CD4-positive, alpha-beta memory T cell (primary cell): ENCODE measurements at regions of chr19 and their contacts with region 1.

Region 1: GRCh38 chr19:45439569-45440254 is 16.0 kb upstream of the ERCC1 start:
- DNase-seq: peak; percentile 87 to 90 (median 87)
- H3K4me3 ChIP-seq: peak overlapping the region in 1 of 2 donors; percentile 66
- H3K4me3 Mint-ChIP-seq: peak overlapping the region; percentile 65 to 83 (median 78)
- H3K27ac ChIP-seq: peak overlapping the region; percentile 62
- H3K27ac Mint-ChIP-seq: peak overlapping the region in 6 of 7 donors; percentile 83 to 96 (median 92)
- H3K4me1 ChIP-seq: peaks cover 36% of the 10 kb centered on the region
- H3K4me1 Mint-ChIP-seq: peaks cover 15 to 40% (median 27%) of the 10 kb centered on the region in 4 donors
- H3K27me3 ChIP-seq: no peaks in the 10 kb centered on the region
- H3K27me3 Mint-ChIP-seq: no peaks in the 10 kb centered on the region

Region 2: DNA sequence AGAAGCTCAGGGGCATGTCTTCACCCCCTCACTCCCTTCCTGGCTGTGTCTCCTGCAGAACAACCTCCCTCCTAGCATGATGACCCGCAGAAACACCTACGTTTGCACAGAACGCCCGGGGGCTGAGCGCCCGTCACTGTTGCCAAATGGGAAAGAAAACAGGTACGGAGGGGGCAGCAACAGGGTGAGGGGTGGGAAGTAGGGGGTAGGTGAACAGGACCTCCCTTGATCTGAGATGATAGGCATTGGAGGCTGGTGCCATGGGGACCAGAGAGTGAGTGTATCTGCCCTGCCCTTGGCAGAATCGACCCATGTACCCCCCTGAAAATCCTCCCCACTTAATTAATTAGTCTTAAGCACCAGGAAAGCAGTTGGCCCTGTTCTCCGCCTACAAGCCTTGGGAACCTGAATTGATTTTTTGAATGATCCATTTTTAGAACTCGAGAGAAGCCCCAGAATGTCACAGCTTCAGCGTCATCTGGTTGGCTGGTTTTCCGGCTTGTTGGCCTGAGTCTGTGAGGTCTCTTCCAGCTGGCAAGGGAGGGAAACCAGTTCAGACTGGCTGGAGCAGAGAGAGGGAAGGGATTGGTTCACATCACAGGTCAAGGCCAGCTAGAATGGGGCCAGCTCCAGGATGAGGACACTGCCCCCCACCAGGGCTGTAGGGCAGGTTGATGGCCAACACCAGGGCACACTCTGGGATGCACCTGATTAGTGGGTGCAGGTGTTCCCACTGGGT is 145.3 kb before region 1 on chr19:
- CTCF ChIA-PET with region 1: no interaction called
- POLR2A ChIA-PET with region 1: no interaction called
- intact Hi-C with region 1: no loop called
- DNase-seq: no peak
- H3K4me3 ChIP-seq: no peak overlapping the region
- H3K4me3 Mint-ChIP-seq: no peak overlapping the region
- H3K27ac ChIP-seq: no peak overlapping the region
- H3K27ac Mint-ChIP-seq: peak overlapping the region in 1 of 7 donors; percentile 17
- H3K4me1 ChIP-seq: no peaks in the 10 kb centered on the region
- H3K4me1 Mint-ChIP-seq: peaks cover 0 to 1% (median 0%) of the 10 kb centered on the region in 4 donors
- H3K27me3 ChIP-seq: no peaks in the 10 kb centered on the region
- H3K27me3 Mint-ChIP-seq: no peaks in the 10 kb centered on the region

Region 3: DNA sequence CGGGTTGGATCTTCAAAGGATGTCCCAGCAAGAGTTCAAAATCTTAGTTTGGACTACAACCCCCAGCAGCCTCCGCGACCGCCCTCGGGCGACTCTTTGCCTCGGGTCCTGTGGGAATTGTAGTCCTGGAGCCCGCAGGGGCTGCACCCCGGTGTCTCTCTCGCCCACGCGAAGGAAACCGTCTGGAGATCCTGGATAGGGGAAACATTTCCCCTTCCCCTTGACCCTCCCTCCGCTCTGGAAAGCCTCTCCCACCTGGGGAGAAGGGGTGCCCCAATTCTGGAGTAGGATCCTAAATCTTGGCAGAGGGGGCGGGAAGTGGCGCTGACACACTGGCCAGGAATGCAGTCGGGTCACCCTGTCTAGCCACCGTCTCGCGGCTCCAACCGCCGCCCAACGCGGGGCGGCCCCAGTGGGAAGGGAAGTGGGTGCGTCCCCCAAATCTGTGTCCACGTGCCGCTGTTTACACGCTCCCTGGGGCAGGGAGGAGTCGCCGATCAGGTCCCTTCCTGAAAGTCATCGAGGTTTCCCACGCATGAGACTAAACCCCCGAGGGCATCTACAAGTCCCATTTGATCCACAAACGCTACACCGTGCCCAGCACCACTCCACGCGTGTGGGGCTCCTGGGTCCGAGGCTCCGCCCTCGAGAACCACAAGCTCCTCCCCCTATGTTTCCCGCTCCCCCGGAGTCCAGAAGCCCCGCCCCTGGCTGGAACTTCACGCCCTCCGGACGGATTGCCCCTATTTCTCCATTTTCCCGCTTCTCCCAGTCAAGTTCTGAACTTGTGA is 34.1 kb before region 1 on chr19:
- CTCF ChIA-PET with region 1: interaction called, 11 read pairs
- POLR2A ChIA-PET with region 1: interaction called, 5 read pairs
- intact Hi-C with region 1: no loop called
- DNase-seq: peak; percentile 80 to 91 (median 82)
- H3K4me3 ChIP-seq: peak overlapping the region; percentile 91 to 94
- H3K4me3 Mint-ChIP-seq: peak overlapping the region; percentile 90 to 99 (median 97)
- H3K27ac ChIP-seq: peak overlapping the region; percentile 65
- H3K27ac Mint-ChIP-seq: peak overlapping the region; percentile 69 to 99 (median 96)
- H3K4me1 ChIP-seq: peaks cover 35% of the 10 kb centered on the region
- H3K4me1 Mint-ChIP-seq: peaks cover 13 to 35% (median 26%) of the 10 kb centered on the region in 4 donors
- H3K27me3 ChIP-seq: peaks cover 16% of the 10 kb centered on the region
- H3K27me3 Mint-ChIP-seq: peaks cover 12 to 22% of the 10 kb centered on the region in 2 donors

Region 4: DNA sequence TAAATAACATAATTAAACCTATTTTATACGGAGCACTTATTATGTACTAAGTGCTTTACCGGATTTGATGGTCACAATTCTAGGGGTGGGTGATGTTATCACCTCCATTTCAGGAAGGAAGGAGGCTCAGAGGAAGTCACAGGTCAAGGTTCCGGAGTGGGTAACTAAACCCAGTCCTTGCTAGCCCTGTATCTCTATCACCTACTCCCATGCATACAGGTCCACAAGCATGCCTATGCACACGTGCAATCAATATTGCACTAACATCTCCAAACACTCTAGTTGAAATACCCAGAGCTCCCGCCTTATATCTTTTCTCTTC is 10.3 kb after region 1 on chr19:
- CTCF ChIA-PET with region 1: interaction called, 19 read pairs
- POLR2A ChIA-PET with region 1: interaction called, 23 read pairs
- intact Hi-C with region 1: no loop called
- DNase-seq: peak in 3 of 5 donors; percentile 61 to 69 (median 64)
- H3K4me3 ChIP-seq: peak overlapping the region; percentile 45 to 50
- H3K4me3 Mint-ChIP-seq: peak overlapping the region; percentile 93 to 97 (median 96)
- H3K27ac ChIP-seq: peak overlapping the region; percentile 99
- H3K27ac Mint-ChIP-seq: peak overlapping the region; percentile 99 to 100 (median 100)
- H3K4me1 ChIP-seq: peaks cover 42% of the 10 kb centered on the region
- H3K4me1 Mint-ChIP-seq: peaks cover 36 to 75% (median 49%) of the 10 kb centered on the region in 4 donors
- H3K27me3 ChIP-seq: no peaks in the 10 kb centered on the region
- H3K27me3 Mint-ChIP-seq: peaks cover 0 to 4% of the 10 kb centered on the region in 2 donors

Region 5: DNA sequence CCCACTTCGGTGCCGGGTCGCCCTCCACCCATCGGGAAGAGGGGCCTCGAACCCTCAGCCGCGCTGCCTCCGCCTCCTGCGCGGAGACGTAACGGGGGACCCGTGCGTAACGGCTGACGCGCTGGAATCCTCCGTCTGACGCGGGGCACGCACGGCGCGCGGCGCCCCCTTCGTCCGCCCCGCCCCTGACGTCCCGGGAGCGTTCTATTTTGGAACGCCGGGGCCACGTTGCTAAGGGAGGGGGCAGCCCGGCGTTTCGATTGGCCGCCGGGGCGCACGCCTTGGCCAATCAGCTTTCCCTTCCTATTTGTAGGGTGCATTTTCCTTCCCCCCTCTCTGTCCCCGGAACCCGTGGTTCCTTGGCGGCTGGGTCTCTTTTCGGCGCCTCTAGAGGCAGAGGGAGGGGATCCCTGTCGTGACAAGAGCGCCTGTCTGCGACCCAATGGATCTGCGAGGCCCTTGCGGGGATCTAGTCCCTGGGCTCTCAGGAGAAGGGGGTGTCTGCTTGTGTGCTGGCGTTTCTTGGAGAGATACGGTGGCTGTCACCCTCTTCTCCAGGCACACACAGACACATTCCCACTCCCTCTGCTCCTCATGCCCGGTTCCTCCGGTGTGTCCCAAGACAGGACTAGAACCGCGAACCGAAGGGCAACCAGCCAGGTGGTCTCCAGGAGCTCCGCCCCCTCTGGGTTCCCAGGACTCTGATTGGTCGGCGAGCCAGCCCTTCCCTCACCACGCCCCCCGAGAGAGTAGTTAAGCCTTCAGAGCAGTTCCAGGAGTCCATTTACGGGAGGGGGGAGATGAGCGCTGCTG is 29.6 kb after region 1 on chr19:
- CTCF ChIA-PET with region 1: interaction called, 487 read pairs
- POLR2A ChIA-PET with region 1: interaction called, 240 read pairs
- intact Hi-C with region 1: loop called (anchors 1 kb)
- DNase-seq: peak; percentile 92 to 97 (median 96)
- H3K4me3 ChIP-seq: peak overlapping the region; percentile 93 to 100
- H3K4me3 Mint-ChIP-seq: peak overlapping the region; percentile 93 to 96 (median 95)
- H3K27ac ChIP-seq: peak overlapping the region; percentile 98
- H3K27ac Mint-ChIP-seq: peak overlapping the region; percentile 99 to 100 (median 99)
- H3K4me1 ChIP-seq: peaks cover 27% of the 10 kb centered on the region
- H3K4me1 Mint-ChIP-seq: peaks cover 9 to 73% (median 21%) of the 10 kb centered on the region in 4 donors
- H3K27me3 ChIP-seq: no peaks in the 10 kb centered on the region
- H3K27me3 Mint-ChIP-seq: peaks cover 2 to 3% of the 10 kb centered on the region in 2 donors

Region 6: DNA sequence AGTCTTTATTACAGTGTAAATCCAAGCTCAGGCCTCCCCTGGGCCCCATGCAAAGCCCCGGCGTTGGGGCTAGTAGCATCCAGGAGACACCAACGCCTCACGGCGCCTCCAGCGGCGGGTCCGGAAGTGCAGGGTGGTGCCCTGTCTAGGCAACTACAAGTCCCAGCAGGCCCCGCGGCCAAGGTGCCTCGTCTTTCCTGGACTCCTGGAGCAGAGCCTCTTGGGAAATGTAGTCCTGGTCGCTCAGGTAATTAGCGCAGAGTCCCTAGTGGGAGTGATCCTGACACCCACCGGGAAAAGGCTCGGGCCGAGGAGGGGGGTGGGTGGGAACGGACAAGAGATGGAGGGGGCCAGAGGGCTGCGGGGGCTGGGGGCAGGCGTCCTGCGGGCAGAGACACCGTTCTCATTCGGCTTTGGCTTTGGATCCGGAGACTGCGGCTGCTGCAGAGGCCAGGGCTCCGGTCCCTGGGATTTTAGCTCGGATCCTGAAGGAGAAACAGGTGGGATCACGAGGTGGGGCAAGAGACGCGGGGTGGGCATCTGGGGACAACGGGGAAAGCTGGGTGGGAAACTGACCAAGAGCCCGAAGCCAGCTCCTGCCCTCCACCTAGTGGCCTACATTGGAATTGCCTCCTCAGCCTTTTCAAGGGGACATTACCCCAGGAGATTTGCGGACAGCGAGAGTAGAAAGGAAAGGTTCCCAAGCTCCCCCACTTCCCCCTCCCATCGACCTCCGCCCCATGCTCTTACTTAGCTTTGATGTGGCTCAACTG is 45.8 kb after region 1 on chr19:
- CTCF ChIA-PET with region 1: interaction called, 487 read pairs
- POLR2A ChIA-PET with region 1: interaction called, 36 read pairs
- intact Hi-C with region 1: loop called (anchors 1 kb)
- DNase-seq: peak; percentile 93 to 97 (median 95)
- H3K4me3 ChIP-seq: peak overlapping the region; percentile 66 to 88
- H3K4me3 Mint-ChIP-seq: peak overlapping the region; percentile 91 to 97 (median 93)
- H3K27ac ChIP-seq: peak overlapping the region; percentile 34
- H3K27ac Mint-ChIP-seq: peak overlapping the region; percentile 72 to 94 (median 89)
- H3K4me1 ChIP-seq: peaks cover 5% of the 10 kb centered on the region
- H3K4me1 Mint-ChIP-seq: peaks cover 0 to 11% (median 7%) of the 10 kb centered on the region in 4 donors
- H3K27me3 ChIP-seq: no peaks in the 10 kb centered on the region
- H3K27me3 Mint-ChIP-seq: peaks cover 2 to 3% of the 10 kb centered on the region in 2 donors

Region 7: DNA sequence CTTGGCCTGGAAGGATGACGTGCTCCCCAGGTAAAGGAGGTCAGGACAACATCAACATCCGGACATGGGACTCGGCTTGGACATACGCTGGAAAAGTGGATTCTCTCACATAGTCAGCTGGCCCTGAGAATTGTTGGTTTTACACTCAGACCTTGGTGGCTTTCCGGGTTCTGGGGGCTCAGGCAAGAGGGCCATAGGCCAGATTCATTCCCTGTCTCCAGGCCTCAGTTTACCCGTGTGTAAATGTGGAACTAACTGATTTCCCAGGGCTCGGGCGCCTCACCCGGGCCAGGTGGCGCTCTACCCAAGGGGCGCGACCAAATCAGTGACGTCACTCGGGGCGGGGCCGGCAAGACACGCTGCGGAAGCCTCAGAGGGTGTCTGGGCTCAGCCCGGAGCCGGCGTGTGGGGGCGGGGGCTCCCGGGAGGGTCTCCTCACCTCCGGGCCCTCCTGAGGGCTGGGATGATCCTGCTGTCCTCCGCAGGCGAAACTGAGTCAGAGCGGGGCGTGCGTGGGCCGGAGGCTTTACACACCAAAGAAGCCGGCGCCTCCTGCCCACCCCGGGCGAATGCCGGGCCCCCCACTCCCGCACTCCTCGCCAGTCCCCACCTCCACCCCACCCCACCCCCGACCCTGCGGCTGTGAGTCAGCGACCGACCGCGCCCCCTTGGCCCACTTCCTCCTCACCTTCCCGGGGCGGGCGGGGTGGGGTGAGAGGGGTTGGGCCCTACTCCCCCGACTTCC is 66.7 kb after region 1 on chr19:
- CTCF ChIA-PET with region 1: interaction called, 4 read pairs
- POLR2A ChIA-PET with region 1: interaction called, 10 read pairs
- intact Hi-C with region 1: no loop called
- DNase-seq: peak; percentile 96 to 98 (median 97)
- H3K4me3 ChIP-seq: peak overlapping the region; percentile 95 to 97
- H3K4me3 Mint-ChIP-seq: peak overlapping the region; percentile 87 to 96 (median 94)
- H3K27ac ChIP-seq: peak overlapping the region; percentile 90
- H3K27ac Mint-ChIP-seq: peak overlapping the region; percentile 96 to 99 (median 97)
- H3K4me1 ChIP-seq: peaks cover 35% of the 10 kb centered on the region
- H3K4me1 Mint-ChIP-seq: peaks cover 20 to 61% (median 34%) of the 10 kb centered on the region in 4 donors
- H3K27me3 ChIP-seq: no peaks in the 10 kb centered on the region
- H3K27me3 Mint-ChIP-seq: no peaks in the 10 kb centered on the region